Activated B cell treated with CpG ODN at 0.5 μM for 24 hours (primary cell): ENCODE measurements at regions of chr10 and their contacts with region 1.

Region 1: DNA sequence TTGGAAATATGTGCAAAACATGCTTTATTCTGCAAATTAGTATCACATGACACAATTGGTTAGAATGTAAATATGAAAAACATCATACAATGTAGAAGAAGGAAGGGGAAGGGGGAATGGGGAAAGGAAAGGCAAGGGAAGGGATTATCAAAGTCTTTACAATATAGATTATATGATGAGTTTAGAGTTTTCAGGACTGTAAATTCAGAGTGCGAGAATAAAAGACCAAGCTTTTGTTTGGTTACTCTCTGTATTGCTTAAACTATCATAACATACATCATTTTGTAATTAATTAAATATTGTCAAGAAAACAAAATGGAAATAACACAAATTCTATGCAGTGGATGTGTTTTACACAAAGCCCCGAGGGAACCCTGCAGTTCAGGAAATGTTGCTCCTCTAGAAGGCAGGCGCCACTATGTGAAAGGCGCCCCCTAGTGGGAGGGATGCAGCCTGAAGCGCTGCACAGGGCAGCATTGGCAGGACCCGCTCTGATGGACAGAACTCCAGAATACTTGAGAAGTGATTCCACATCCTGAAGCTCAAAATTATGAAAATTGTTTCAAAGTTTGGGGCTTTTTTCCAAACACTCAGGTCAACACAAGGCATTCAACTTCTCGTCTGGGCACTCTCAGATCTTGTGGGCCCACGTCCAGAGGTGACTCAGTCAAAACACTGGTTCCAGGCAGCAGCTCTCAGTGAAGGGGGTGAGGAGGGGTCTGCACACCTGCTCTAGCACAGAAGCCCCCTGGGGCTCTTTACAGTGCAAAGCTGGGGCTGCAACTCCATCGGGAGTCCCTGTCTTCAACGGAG is 31.6 kb upstream of the TMEM254 start:
- DNase-seq: peak; percentile 59
- ATAC-seq: peak; percentile 84
- H3K4me3 Mint-ChIP-seq: no peak overlapping the region
- H3K27ac Mint-ChIP-seq: no peak overlapping the region
- H3K4me1 Mint-ChIP-seq: peaks cover 10% of the 10 kb centered on the region
- H3K27me3 Mint-ChIP-seq: no peaks in the 10 kb centered on the region
- CTCF ChIP-seq: peak; percentile 73

Region 2: DNA sequence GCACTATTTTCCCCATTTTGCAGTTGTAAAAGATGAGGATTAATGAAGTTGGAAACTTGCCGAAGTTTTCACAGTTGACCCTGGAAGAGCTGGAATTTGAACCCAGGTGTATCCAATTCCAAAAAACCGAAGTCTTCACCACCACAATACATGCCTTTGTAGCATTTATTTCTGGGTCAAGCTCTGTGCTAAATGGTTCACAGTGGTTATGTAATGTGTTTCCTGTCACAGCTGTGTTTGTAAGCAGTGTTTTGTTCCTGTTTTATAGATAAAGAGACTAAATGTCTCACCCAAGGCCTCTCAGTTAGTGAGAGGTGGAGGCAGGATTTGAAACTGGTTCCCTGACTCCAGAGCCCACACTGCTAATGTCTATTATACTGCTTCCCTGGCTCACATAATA is 504.2 kb before region 1 on chr10:
- CTCF ChIA-PET with region 1: no interaction called
- POLR2A ChIA-PET with region 1: no interaction called
- intact Hi-C with region 1: loop called (anchors 1 kb)
- DNase-seq: no peak
- ATAC-seq: no peak
- H3K4me3 Mint-ChIP-seq: no peak overlapping the region
- H3K27ac Mint-ChIP-seq: no peak overlapping the region
- H3K4me1 Mint-ChIP-seq: no peaks in the 10 kb centered on the region
- H3K27me3 Mint-ChIP-seq: no peaks in the 10 kb centered on the region
- CTCF ChIP-seq: no peak

Region 3: GRCh38 chr10:79562135-79562756 is 484.6 kb before region 1 on chr10:
- CTCF ChIA-PET with region 1: no interaction called
- POLR2A ChIA-PET with region 1: no interaction called
- intact Hi-C with region 1: loop called (anchors 1 kb)
- DNase-seq: no peak
- ATAC-seq: peak; percentile 64
- H3K4me3 Mint-ChIP-seq: no peak overlapping the region
- H3K27ac Mint-ChIP-seq: no peak overlapping the region
- H3K4me1 Mint-ChIP-seq: peaks cover 2% of the 10 kb centered on the region
- H3K27me3 Mint-ChIP-seq: peaks cover 24% of the 10 kb centered on the region
- CTCF ChIP-seq: peak; percentile 57

Region 4: DNA sequence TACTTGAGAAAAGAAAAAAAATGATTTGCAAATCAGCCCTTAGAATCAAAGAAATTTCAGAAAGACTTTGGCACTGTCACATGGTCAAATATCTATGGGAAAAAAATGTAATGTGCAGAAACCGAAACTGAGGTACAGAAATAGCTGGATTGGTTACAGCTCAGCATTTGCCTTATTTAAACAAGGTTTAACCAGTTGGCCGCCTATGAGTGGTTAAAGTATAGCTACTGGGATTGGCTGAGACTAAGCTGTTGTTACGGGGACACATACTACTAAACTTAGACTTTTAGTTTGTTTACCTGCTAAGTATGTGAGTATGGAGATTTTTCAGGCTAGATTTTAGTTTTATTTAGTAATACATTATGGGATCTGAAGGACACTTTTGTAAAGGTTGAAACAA is 136.5 kb before region 1 on chr10:
- CTCF ChIA-PET with region 1: interaction called, 15 read pairs
- POLR2A ChIA-PET with region 1: no interaction called
- intact Hi-C with region 1: loop called (anchors 1 kb)
- DNase-seq: no peak
- ATAC-seq: no peak
- H3K4me3 Mint-ChIP-seq: no peak overlapping the region
- H3K27ac Mint-ChIP-seq: no peak overlapping the region
- H3K4me1 Mint-ChIP-seq: peaks cover 3% of the 10 kb centered on the region
- H3K27me3 Mint-ChIP-seq: peaks cover 24% of the 10 kb centered on the region
- CTCF ChIP-seq: no peak

Region 5: GRCh38 chr10:80025281-80025680 is 21.6 kb before region 1 on chr10:
- CTCF ChIA-PET with region 1: interaction called, 4 read pairs
- POLR2A ChIA-PET with region 1: no interaction called
- intact Hi-C with region 1: loop called (anchors 2 kb)
- DNase-seq: no peak
- ATAC-seq: no peak
- H3K4me3 Mint-ChIP-seq: no peak overlapping the region
- H3K27ac Mint-ChIP-seq: no peak overlapping the region
- H3K4me1 Mint-ChIP-seq: peaks cover 3% of the 10 kb centered on the region
- H3K27me3 Mint-ChIP-seq: no peaks in the 10 kb centered on the region
- CTCF ChIP-seq: no peak

Region 6: DNA sequence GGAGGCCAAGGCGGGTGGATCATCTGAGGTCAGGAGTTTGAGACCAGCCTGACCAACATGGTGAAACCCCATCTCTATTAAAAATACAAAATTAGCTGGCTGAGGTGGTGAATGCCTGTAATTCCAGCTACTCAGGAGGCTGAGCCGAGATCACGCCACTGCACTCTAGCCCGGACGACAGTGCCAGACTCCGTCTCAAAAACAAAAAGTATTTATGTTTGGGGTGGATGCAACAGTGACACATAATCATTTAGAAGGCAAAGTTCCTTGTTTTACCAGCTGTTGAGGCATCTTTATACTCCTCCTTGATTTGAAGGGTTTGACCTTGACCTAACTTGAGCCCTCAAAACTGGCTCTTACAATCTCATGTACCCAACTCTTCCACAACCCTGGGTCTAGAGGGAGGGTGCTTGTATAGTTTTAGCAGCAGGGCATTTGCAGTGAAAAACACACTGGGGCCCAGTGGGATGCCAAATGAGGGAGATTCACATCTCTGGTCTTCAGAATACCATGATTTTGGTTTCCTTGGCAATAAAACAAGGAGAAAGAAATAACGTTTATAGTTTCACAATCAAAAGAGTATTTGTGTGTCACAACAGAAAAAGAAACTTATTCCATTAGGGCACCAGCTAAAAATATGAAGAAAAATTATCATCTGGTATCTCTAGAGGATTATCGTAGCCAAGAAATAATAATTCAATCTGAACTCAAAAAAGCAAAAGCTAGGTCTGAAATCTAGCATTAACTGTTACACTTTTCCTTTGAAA is 17.5 kb after region 1 on chr10:
- CTCF ChIA-PET with region 1: interaction called, 18 read pairs
- POLR2A ChIA-PET with region 1: no interaction called
- intact Hi-C with region 1: no loop called
- DNase-seq: no peak
- ATAC-seq: no peak
- H3K4me3 Mint-ChIP-seq: no peak overlapping the region
- H3K27ac Mint-ChIP-seq: no peak overlapping the region
- H3K4me1 Mint-ChIP-seq: no peaks in the 10 kb centered on the region
- H3K27me3 Mint-ChIP-seq: no peaks in the 10 kb centered on the region
- CTCF ChIP-seq: no peak

Region 7: GRCh38 chr10:80187465-80188409 is 140.9 kb after region 1 on chr10:
- CTCF ChIA-PET with region 1: no interaction called
- POLR2A ChIA-PET with region 1: interaction called, 10 read pairs
- intact Hi-C with region 1: no loop called
- DNase-seq: peak; percentile 57
- ATAC-seq: peak; percentile 91
- H3K4me3 Mint-ChIP-seq: peak overlapping the region; percentile 68
- H3K27ac Mint-ChIP-seq: peak overlapping the region; percentile 91
- H3K4me1 Mint-ChIP-seq: peaks cover 82% of the 10 kb centered on the region
- H3K27me3 Mint-ChIP-seq: no peaks in the 10 kb centered on the region
- CTCF ChIP-seq: no peak